ENCODE measurements at regions of chrX and their contacts with region 1.

Region 1: GRCh38 chrX:138929926-138930582 is 218.5 kb upstream of the FGF13 start:
- DNase-seq: no peak
- H3K4me3 ChIP-seq: no peak overlapping the region
- H3K27ac ChIP-seq: no peak overlapping the region
- H3K4me1 ChIP-seq: no peaks in the 10 kb centered on the region
- H3K27me3 ChIP-seq: no peaks in the 10 kb centered on the region
- CTCF ChIP-seq: no peak
- POLR2A ChIP-seq: no peak

Region 2: GRCh38 chrX:138669693-138670092 is 260.4 kb before region 1 on chrX:
- intact Hi-C with region 1: loop called (anchors 10 kb)
- DNase-seq: no peak
- H3K4me3 ChIP-seq: no peak overlapping the region
- H3K27ac ChIP-seq: no peak overlapping the region
- H3K4me1 ChIP-seq: no peaks in the 10 kb centered on the region
- H3K27me3 ChIP-seq: peaks cover 0 to 8% of the 10 kb centered on the region in 2 donors
- CTCF ChIP-seq: no peak
- POLR2A ChIP-seq: no peak